ENCODE measurements at regions of chr22 and their contacts with region 1.

Region 1: DNA sequence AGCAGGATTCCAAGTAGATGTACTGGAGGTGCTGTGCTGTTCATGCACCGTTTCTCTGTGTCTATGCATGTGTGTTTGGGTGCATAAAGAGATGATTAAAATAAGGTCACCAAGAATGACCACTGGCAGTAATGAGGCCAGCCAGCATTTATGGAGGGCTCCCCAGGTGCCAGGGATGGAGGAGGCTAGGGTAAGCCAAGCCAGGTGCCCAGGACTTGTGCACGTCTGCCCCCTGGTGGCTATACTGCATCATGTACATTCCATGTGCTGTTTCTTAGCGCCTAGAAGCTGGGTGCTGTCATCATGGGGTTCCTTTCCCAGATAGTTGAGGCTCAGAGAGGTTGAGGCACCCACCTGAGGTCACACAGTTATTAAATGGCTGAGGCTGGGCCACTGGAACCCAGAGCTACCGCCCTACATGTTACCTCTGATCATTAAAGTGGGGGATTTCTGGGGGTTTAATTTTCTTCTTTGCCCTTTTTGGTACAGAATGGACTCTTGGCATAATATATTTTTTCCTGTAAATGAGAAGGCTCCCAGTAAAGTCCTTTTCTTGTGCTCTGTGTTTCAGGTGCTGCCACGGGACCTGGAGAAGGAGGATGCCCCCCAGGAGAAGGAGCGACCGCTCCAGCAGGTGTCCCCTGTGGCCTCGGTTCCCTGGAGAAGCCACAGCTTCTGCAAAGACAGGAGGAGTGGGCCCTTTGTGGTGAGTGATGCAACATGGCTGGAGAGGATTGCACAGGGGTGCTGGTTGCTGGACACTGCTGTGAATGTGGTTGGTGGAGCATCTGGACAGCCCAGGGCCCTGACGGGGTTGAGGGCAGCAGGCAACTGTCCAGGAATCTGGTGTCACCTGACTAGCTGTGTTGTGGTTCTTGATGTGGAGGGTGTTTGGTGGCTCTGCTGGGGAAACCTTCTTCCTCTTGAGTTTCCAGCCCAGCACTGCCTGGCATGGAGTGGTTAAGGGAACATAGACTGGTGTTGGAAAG is 96.4 kb downstream of the KIAA1671 start:
- DNase-seq: peak; percentile 84
- ATAC-seq: peak; percentile 94
- H3K4me3 Mint-ChIP-seq: no peak overlapping the region
- H3K27ac Mint-ChIP-seq: no peak overlapping the region
- H3K4me1 Mint-ChIP-seq: peaks cover 7% of the 10 kb centered on the region
- H3K27me3 Mint-ChIP-seq: peaks cover 8% of the 10 kb centered on the region

Region 2: GRCh38 chr22:24938741-24939341 is 110.1 kb before region 1 on chr22:
- CTCF ChIA-PET with region 1: interaction called, 83 read pairs
- DNase-seq: peak; percentile 50
- ATAC-seq: peak; percentile 49
- H3K4me3 Mint-ChIP-seq: no peak overlapping the region
- H3K27ac Mint-ChIP-seq: no peak overlapping the region
- H3K4me1 Mint-ChIP-seq: no peaks in the 10 kb centered on the region
- H3K27me3 Mint-ChIP-seq: peaks cover 10% of the 10 kb centered on the region

Region 3: DNA sequence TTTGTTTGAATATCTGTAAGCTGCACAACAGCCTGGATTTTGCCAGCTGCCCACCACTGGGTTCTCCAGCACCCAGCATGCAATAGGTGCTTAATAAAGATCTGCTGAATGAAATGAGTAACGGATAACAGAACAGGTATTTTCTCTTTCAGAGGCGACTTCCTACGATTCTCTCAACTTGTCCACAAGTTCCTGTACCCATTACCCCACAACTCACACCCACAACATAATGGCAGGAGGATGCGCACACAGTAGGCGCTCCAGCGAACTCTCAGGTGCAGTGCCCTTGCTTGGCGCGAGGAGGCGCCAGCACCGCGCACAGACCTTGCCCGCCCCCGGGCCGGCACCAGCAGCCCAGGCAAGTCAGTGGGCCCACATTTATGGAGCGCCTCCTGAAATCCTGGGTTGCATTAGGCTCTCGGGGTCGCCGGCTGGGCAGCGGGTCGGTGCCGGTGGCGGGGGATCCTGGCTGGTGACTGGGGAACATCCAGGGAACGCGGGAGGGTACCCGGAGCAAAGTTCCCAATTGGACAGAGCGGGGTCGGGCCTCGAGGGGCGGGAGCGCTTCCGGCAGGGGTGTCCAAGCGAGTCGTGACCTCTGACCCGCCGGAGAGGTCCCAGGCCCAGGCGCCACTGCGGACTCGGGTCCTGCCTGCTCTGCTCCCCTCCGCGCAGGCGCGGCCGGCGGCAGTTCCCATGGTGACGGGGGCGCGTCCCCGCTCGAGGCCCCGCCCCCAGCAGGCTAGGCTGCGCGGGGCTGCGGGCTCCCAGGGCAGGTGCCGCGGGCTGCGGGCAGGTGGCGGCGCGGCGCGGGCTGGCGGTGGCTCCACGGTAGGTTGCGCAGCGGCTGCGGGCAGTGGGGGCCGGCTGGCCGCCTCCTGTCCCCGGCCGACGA is 96.8 kb before region 1 on chr22 and contains the start of gene KIAA1671:
- CTCF ChIA-PET with region 1: interaction called, 190 read pairs
- DNase-seq: peak; percentile 87
- ATAC-seq: peak; percentile 94
- H3K4me3 Mint-ChIP-seq: peak within 1 kb of the TSS; percentile 74
- H3K27ac Mint-ChIP-seq: peak within 1 kb of the TSS; percentile 60
- H3K4me1 Mint-ChIP-seq: peaks cover 24% of the 10 kb centered on the region
- H3K27me3 Mint-ChIP-seq: peaks cover 74% of the 10 kb centered on the region
- total RNA-seq, gene KIAA1671: 11.4 to 20.1 TPM

Region 4: DNA sequence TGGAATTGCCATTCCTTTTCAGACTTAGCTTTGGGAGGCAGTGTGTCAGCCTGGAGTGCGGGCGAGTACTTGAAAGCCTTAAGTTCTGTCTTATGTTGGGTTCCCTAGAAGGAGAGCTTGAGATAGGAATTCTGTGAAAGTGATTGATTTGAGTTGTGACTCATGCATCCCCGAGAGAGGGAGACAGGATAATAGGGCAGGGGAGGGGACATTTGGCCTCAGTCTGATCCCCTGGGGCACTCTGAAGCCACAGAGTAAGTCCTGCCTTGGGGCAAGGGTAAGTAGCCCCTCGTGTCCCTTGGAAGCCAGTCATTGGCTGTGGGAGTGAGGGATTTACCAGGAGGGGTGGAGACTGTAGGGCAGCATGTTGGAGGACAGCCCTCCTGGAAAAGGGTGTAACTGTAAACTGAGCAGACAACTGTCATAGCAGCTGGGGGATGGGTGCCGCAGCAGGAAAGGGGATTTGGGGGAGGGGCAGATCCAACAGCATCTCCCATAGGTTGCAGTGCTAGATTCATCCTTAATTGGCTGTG is 52.5 kb before region 1 on chr22:
- CTCF ChIA-PET with region 1: interaction called, 12 read pairs
- DNase-seq: no peak
- ATAC-seq: no peak
- H3K4me3 Mint-ChIP-seq: no peak overlapping the region
- H3K27ac Mint-ChIP-seq: no peak overlapping the region
- H3K4me1 Mint-ChIP-seq: peaks cover 46% of the 10 kb centered on the region
- H3K27me3 Mint-ChIP-seq: peaks cover 17% of the 10 kb centered on the region

Region 5: DNA sequence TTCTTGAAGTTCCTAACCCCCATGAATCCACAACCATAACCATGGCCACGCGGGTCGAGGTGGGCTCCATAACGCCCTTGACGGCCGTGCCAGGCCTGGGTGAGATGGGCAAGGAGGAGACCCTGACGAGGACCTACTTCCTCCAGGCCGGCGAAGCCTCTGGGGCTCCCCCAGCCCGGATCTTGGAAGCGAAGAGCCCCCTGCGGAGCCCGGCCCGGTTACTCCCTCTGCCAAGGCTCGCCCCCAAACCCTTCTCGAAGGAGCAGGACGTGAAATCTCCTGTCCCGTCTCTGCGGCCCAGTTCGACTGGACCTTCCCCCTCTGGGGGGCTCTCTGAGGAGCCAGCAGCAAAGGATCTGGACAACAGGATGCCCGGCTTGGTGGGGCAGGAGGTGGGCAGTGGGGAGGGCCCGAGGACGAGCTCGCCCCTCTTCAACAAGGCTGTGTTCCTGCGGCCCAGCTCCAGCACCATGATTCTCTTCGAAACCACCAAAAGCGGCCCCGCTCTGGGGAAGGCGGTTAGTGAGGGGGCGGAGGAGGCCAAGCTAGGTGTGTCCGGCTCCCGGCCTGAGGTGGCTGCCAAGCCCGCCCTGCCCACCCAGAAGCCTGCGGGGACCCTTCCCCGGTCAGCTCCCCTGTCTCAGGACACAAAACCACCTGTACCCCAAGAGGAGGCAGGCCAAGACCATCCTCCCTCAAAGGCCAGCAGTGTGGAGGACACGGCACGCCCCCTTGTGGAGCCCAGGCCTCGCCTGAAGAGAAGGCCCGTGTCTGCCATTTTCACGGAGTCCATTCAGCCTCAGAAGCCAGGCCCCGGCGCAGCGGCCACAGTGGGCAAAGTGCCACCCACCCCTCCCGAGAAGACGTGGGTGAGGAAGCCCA is 20.8 kb before region 1 on chr22:
- CTCF ChIA-PET with region 1: interaction called, 15 read pairs
- DNase-seq: peak; percentile 54
- ATAC-seq: no peak
- H3K4me3 Mint-ChIP-seq: no peak overlapping the region
- H3K27ac Mint-ChIP-seq: no peak overlapping the region
- H3K4me1 Mint-ChIP-seq: peaks cover 31% of the 10 kb centered on the region
- H3K27me3 Mint-ChIP-seq: peaks cover 16% of the 10 kb centered on the region

Region 6: GRCh38 chr22:25076336-25076735 is 27.4 kb after region 1 on chr22:
- CTCF ChIA-PET with region 1: interaction called, 85 read pairs
- DNase-seq: peak; percentile 73
- ATAC-seq: peak; percentile 75
- H3K4me3 Mint-ChIP-seq: peak overlapping the region; percentile 56
- H3K27ac Mint-ChIP-seq: peak overlapping the region; percentile 84
- H3K4me1 Mint-ChIP-seq: peaks cover 75% of the 10 kb centered on the region
- H3K27me3 Mint-ChIP-seq: no peaks in the 10 kb centered on the region

Measured in activated CD8-positive, alpha-beta memory T cell treated with anti-CD3 and anti-CD28 coated beads, Interleukin-2, amount 10 ng/mL, durations not matched to agents 7 days and 5 days (primary cell).